Vagina (tissue), 2 donors: ENCODE measurements at regions of chr2 and their contacts with region 1.

Region 1: DNA sequence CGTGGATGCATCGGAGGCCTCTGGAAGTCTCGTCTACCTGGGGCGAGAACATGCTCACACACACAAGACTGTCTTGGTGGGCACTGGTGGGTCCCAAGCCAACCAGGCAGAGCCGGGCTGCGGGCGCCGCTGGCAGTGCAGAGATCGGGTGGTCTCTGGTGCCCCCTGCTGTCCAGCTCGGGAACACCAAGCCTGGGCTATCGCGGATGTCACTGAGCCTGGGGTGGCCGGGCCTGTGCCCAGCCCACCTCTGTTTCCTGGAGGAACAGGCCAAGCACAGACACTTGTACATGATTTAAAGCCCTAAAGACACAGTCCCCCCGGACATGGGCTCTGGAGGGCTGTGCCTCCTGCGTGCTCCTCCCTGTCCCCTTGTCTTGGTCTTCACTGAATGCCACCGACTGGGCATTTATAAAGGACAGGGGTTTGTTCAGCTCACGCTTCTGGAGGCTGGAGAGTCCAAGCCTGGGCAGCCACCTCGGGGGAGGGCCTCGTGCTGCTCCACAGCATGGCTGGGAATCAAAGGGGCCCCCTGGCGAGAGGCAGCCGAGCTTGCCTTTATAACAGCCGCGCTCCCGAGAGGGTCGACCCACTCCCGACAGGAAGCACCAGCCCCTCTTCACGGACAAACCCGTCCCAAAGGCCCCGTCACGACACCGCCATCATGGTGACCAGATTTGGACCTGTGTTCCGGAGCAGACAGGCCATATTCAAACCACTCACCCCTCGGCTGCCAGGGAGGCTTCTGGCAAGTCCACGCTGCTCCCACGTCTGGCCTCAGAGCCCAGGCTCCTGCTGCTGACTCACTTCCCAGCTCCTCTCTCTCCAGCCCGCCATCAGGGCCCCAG is 3.6 kb upstream of the OTOS start:
- DNase-seq: no peak
- H3K4me3 ChIP-seq: no peak overlapping the region
- H3K27ac ChIP-seq: no peak overlapping the region
- H3K4me1 ChIP-seq: no peaks in the 10 kb centered on the region
- H3K27me3 ChIP-seq: no peaks in the 10 kb centered on the region
- CTCF ChIP-seq: peak; percentile 83 to 90 (median 88)
- POLR2A ChIP-seq: no peak

Region 2: DNA sequence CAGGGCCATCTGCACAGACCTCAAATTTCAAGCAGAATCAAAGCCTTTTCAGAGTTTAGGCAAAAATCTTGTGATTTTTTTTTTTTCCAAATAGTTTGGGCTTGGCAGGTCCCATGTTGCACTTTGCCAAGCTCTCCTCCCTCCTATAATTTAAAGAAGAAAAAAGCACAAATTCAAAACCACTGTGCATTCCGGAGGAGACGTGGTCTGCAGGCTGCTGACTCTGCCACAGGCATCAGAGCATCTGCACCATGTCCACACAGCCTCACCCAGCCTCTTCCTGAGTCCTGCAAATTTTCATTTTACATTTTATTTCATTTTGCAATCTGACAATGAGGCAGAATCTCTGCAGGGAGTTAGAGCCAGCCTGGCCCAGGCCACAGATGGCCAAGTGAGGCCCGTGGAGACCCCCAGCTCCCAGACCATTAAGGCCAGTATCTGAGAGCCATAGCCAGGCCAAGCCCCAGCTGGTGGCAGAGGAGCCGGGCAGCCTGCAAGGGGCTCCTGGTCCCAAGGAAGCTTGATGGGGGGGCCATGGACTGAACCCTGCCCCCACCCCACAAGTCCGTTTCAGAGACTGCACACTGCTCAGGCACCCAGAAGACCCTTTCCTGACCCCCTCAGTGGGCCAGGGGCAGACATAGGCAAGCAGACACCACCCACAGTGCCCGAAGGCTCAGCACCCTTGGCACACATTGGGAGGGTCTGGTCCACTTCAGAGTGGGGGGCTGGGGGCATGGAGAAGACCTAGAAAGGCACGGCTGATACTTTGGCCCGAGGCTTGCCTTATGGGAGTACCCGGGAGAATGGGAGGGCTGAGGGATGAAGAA is 275.9 kb after region 1 on chr2:
- intact Hi-C with region 1: loop called (anchors 5 kb)
- DNase-seq: no peak
- H3K4me3 ChIP-seq: no peak overlapping the region
- H3K27ac ChIP-seq: no peak overlapping the region
- H3K4me1 ChIP-seq: no peaks in the 10 kb centered on the region
- H3K27me3 ChIP-seq: no peaks in the 10 kb centered on the region
- CTCF ChIP-seq: no peak
- POLR2A ChIP-seq: no peak